ENCODE measurements at regions of chr6 and their contacts with region 1.

Region 1: GRCh38 chr6:168555618-168556273 is 114.8 kb downstream of the SMOC2 start:
- DNase-seq: no peak
- ATAC-seq: no peak
- H3K4me3 ChIP-seq: no peak overlapping the region
- H3K27ac ChIP-seq: no peak overlapping the region
- H3K4me1 ChIP-seq: no peaks in the 10 kb centered on the region
- H3K27me3 ChIP-seq: no peaks in the 10 kb centered on the region
- CTCF ChIP-seq: no peak

Region 2: DNA sequence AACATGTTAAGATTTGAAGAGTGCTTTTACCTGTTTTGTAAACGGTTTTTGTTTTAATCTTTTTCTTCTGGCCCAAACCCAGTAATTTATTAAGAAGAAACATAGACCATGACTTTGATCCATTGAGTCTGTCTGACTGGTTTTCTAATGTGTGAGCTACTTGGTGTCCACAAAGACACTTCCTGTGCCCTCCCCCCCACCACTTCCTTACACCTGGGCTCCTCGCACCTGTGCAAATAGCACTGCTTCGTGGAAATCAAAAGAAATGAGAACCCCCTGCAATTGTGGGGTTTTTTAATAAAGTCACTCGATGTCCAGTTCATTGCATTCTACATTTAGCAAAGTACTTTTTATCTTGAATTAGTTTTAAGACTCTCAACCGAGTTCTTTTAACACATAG is 49.3 kb before region 1 on chr6:
- intact Hi-C with region 1: no loop called
- DNase-seq: no peak
- ATAC-seq: no peak
- H3K4me3 ChIP-seq: no peak overlapping the region
- H3K27ac ChIP-seq: no peak overlapping the region
- H3K4me1 ChIP-seq: no peaks in the 10 kb centered on the region
- H3K27me3 ChIP-seq: peaks cover 0 to 8% (median 2%) of the 10 kb centered on the region in 3 donors
- CTCF ChIP-seq: no peak

Region 3: GRCh38 chr6:168611691-168612090 is 55.9 kb after region 1 on chr6:
- intact Hi-C with region 1: loop called in 1 of 2 experiments (anchors 2 kb)
- DNase-seq: no peak
- ATAC-seq: no peak
- H3K4me3 ChIP-seq: no peak overlapping the region
- H3K27ac ChIP-seq: no peak overlapping the region
- H3K4me1 ChIP-seq: no peaks in the 10 kb centered on the region
- H3K27me3 ChIP-seq: peaks cover 0 to 4% (median 2%) of the 10 kb centered on the region in 3 donors
- CTCF ChIP-seq: no peak